AG04449 (cell line): ENCODE measurements at regions of chr2 and their contacts with region 1.

Region 1: GRCh38 chr2:64562148-64562784 is 38.1 kb downstream of the AFTPH start:
- DNase-seq: no peak
- H3K4me3 ChIP-seq: no peak overlapping the region
- CTCF ChIP-seq: peak; percentile 15

Region 2: GRCh38 chr2:64538764-64539433 is 23.4 kb before region 1 on chr2:
- CTCF ChIA-PET with region 1: interaction called, 11 read pairs
- POLR2A ChIA-PET with region 1: no interaction called
- DNase-seq: no peak
- H3K4me3 ChIP-seq: no peak overlapping the region
- CTCF ChIP-seq: no peak

Region 3: DNA sequence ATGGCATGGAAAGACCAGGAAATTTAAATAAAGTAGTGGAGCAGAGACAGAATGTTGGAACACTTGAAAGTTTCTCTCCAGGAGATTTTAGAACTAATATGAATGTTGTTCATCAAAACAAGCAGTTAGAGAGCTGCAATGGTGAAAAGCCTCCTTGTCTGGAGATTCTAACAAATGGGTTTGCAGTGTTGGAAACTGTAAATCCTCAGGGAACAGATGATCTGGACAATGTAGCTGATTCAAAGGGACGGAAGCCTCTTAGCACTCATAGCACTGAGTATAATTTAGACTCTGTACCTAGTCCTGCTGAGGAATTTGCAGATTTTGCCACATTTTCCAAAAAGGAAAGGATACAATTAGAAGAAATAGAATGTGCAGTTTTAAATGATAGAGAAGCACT is 10.4 kb before region 1 on chr2:
- CTCF ChIA-PET with region 1: interaction called, 20 read pairs
- POLR2A ChIA-PET with region 1: no interaction called
- DNase-seq: no peak
- H3K4me3 ChIP-seq: no peak overlapping the region
- CTCF ChIP-seq: no peak